ENCODE measurements at regions of chr7 and their contacts with region 1.

Region 1: GRCh38 chr7:106009403-106010226 is 46.6 kb downstream of the CDHR3 start:
- DNase-seq: peak; percentile 88 to 99
- H3K4me3 ChIP-seq: peak overlapping the region in 3 of 4 experiments; percentile 13 to 36 (median 26); a peak in 3 of 8 replicates
- H3K27ac ChIP-seq: 0 out of 2 replicates have a peak overlapping the region, but pooled peaks have one; percentile 16
- H3K4me1 ChIP-seq: peaks cover 3 to 12% (median 6%) of the 10 kb centered on the region in 4 experiments; a peak in 6 of 7 replicates
- H3K27me3 ChIP-seq: peaks cover 0 to 3% (median 2%) of the 10 kb centered on the region in 4 experiments; a peak in 3 of 7 replicates
- CTCF ChIP-seq: peak; percentile 93 to 97 (median 94)
- EP300 ChIP-seq: peak in 1 of 2 experiments; percentile 82; a peak in 1 of 3 replicates
- POLR2A ChIP-seq: no peak
- RAD21 ChIP-seq: peak; percentile 92 to 95

Region 2: GRCh38 chr7:105934572-105935185 is 74.9 kb before region 1 on chr7:
- CTCF ChIA-PET with region 1: interaction called, 61 read pairs
- POLR2A ChIA-PET with region 1: interaction called, 3 read pairs
- DNase-seq: peak in 1 of 2 experiments; percentile 38
- H3K4me3 ChIP-seq: no peak overlapping the region
- H3K27ac ChIP-seq: no peak overlapping the region
- H3K4me1 ChIP-seq: peaks cover 0 to 4% (median under 1%) of the 10 kb centered on the region in 4 experiments; a peak in 2 of 7 replicates
- H3K27me3 ChIP-seq: no peaks in the 10 kb centered on the region
- CTCF ChIP-seq: peak; percentile 48 to 80 (median 78)
- EP300 ChIP-seq: no peak
- POLR2A ChIP-seq: no peak
- RAD21 ChIP-seq: peak; percentile 91 to 94

Region 3: DNA sequence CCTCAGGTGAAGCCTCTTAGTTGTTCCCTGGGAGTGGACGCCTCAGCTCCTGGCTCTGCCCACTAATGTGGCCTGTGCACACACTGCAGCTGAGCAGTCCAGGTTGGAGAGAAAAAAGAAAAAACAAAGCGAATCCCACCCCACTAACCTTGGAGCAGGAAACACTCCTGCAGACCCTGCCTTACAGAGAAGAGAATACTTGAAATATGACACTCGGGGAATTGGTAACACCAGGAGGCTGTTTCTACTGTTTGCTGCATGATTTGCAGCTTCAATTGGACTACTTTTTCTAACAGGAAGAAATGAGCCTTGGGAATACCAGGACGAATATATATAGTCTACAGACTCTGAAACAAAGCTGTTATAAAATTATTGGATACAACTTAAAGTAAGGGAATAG is 24.4 kb before region 1 on chr7:
- CTCF ChIA-PET with region 1: interaction called, 32 read pairs
- POLR2A ChIA-PET with region 1: no interaction called
- DNase-seq: no peak
- H3K4me3 ChIP-seq: no peak overlapping the region
- H3K27ac ChIP-seq: no peak overlapping the region
- H3K4me1 ChIP-seq: peaks cover 8 to 35% (median 32%) of the 10 kb centered on the region in 4 experiments
- H3K27me3 ChIP-seq: no peaks in the 10 kb centered on the region
- CTCF ChIP-seq: no peak
- EP300 ChIP-seq: no peak
- POLR2A ChIP-seq: no peak
- RAD21 ChIP-seq: no peak

Region 4: GRCh38 chr7:105990726-105991453 is 18.7 kb before region 1 on chr7:
- CTCF ChIA-PET with region 1: interaction called, 32 read pairs
- POLR2A ChIA-PET with region 1: no interaction called
- DNase-seq: peak; percentile 68 to 72
- H3K4me3 ChIP-seq: no peak overlapping the region
- H3K27ac ChIP-seq: no peak overlapping the region; the same call in 1 of the 2 replicates
- H3K4me1 ChIP-seq: peaks cover 11 to 34% (median 28%) of the 10 kb centered on the region in 4 experiments; a peak in 6 of 7 replicates
- H3K27me3 ChIP-seq: no peaks in the 10 kb centered on the region
- CTCF ChIP-seq: peak; percentile 37 to 76 (median 73)
- EP300 ChIP-seq: 0 out of 3 replicates have a peak, but pooled peaks of 1 of the 2 experiments have one; percentile 16
- POLR2A ChIP-seq: no peak
- RAD21 ChIP-seq: peak; percentile 40 to 49

Region 5: DNA sequence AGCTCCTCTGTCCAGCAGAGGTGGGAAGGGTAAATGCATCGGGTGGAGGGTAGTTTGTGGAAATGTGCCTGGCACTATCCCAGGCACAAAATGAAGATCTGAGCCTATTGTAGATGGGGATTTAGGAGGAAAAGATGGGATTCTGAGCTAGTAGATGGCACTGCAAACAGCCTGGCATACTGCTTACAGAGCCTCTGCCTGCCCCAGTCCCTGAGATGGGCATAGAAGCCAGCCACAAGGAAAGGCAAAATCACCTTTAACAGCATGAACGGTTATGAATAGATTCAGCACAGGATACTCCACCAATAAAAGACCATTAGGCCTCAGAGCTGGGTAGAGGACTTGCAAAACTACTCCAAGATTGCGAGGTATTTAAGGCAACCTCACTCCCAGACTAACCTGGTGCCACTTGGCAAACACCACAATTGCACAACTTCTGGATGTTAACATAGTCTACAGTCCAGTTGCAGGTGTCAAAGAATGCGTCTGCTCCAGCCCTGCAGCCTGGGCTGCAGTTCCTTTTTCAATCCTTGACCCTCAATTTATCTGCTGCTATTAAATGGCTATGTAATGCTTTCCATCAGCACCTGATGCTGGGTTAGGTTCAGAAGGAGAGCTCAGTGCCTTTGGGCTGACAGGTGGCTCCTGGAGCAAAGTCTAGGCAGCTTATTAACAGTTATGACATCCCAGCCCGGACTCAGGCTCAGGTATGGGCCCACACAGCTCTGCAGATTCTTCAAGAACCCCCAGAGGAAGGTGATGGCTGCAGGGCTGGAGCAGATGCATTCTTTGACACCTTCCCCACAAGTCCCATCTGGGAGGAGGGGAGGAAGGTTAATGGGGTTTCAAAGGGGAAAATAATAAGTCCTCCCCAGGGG is 12.5 kb before region 1 on chr7:
- CTCF ChIA-PET with region 1: interaction called, 15 read pairs
- POLR2A ChIA-PET with region 1: interaction called, 3 read pairs
- DNase-seq: no peak
- H3K4me3 ChIP-seq: no peak overlapping the region
- H3K27ac ChIP-seq: no peak overlapping the region
- H3K4me1 ChIP-seq: peaks cover 0 to 5% (median 3%) of the 10 kb centered on the region in 4 experiments; a peak in 5 of 7 replicates
- H3K27me3 ChIP-seq: no peaks in the 10 kb centered on the region; a peak in 1 of 7 replicates
- CTCF ChIP-seq: no peak
- EP300 ChIP-seq: no peak
- POLR2A ChIP-seq: no peak
- RAD21 ChIP-seq: no peak

Region 6: DNA sequence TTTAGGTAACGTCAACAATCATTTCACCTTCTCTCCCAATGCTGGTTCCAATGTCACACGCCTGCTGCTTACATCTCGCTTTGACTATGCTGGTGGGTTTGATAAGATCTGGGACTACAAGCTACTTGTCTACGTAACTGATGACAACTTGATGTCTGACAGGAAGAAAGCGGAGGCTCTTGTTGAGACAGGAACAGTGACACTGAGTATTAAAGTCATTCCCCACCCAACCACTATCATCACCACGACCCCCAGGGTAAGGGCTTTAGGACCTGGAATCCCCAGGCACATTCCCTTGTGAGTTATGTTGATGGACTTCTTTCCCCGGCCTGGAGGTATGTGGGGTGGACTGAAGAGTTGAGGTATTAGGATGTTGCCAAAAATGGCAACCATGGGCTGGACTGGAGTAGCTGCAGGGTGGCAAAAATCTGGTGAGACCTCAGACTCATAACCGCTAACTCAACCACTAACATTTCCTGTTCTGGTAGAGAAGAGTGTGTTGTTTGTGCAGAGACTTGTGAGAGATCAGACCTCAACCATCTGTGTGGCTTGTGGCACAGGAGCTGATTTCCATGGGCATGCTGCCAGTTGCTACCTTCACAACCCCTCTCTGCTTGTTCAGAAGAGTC is 12.7 kb after region 1 on chr7:
- CTCF ChIA-PET with region 1: interaction called, 68 read pairs
- POLR2A ChIA-PET with region 1: interaction called, 3 read pairs
- DNase-seq: no peak
- H3K4me3 ChIP-seq: no peak overlapping the region
- H3K27ac ChIP-seq: no peak overlapping the region
- H3K4me1 ChIP-seq: peaks cover 5 to 11% (median 6%) of the 10 kb centered on the region in 4 experiments; a peak in 6 of 7 replicates
- H3K27me3 ChIP-seq: no peaks in the 10 kb centered on the region
- CTCF ChIP-seq: no peak
- EP300 ChIP-seq: no peak
- POLR2A ChIP-seq: no peak
- RAD21 ChIP-seq: no peak

Region 7: DNA sequence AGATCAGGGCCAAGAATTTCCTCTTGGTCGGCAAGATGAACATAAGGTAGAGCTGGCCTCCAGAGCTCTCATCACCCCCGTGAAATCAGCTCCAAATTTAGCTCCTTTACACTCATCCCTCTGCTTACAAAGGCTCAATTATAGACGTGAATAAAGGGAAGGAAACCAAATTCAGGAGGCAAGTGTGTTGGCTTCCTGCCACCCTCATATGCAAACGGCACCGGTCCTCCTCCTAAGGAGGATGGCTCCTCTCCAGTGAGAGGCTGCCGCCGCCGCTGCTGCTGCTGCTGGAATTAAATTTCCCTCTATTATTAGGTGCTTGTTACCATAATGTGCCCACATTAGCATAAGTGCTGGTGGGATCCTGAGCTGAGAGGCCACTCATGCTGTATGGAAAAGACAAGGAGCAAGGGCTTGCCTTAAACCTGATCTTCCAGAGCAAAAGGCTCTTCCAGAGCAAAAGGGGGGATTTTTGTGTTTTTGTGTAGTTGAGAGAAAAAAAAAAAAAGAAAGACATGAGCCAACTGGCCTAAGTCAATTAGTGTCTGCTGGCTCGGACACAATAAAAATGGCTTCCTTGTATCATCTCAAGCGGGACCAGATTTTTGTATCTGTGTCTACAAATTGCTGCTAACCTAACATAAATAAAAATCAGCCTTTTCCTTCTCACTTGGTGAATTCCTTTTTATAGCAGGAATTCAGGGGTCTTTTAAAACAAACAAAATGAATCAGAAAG is 21.9 kb after region 1 on chr7:
- CTCF ChIA-PET with region 1: interaction called, 68 read pairs
- POLR2A ChIA-PET with region 1: no interaction called
- DNase-seq: no peak
- H3K4me3 ChIP-seq: no peak overlapping the region; a peak in 1 of 8 replicates
- H3K27ac ChIP-seq: no peak overlapping the region
- H3K4me1 ChIP-seq: peaks cover 0 to 16% (median 5%) of the 10 kb centered on the region in 4 experiments; a peak in 5 of 7 replicates
- H3K27me3 ChIP-seq: no peaks in the 10 kb centered on the region
- CTCF ChIP-seq: no peak
- EP300 ChIP-seq: no peak
- POLR2A ChIP-seq: no peak
- RAD21 ChIP-seq: no peak

Region 8: DNA sequence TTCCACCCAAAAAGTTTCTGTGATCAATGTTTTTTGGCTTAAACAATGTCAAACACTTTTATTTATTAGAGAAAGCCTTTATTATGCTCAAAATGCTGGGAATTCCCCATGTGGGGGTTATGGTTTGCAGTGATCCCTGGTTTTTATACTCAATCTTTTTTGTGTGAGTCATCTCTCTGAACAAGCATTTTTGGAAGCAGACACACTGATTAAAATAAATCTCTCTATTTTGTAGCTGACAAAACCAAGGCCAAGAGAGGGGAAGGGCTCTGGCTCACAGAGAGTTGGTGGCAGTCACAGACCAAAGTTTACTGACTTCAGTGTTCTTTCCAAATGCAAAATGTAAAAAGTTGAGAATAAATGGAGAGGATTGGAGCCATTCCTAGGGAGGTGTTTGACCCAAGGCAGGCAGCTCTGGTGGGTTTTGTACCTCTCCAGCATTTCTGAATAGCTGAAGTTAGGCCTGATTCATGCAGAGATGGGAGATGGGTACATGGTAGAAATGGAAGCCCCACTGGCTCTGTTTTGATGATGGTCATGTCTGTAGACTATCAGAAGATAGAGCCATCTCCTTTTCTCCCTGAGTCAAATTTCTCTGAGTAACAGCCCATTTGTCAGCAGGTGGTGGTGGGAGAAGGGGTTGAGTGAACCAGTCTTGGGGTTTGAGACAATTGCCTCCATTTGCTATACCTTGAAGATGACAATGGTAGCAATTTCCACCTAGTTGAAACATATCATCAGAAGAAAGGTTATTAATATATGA is 320.5 kb after region 1 on chr7:
- CTCF ChIA-PET with region 1: no interaction called
- POLR2A ChIA-PET with region 1: no interaction called
- DNase-seq: no peak
- H3K4me3 ChIP-seq: no peak overlapping the region
- H3K27ac ChIP-seq: no peak overlapping the region
- H3K4me1 ChIP-seq: no peaks in the 10 kb centered on the region
- H3K27me3 ChIP-seq: no peaks in the 10 kb centered on the region
- CTCF ChIP-seq: no peak
- EP300 ChIP-seq: no peak
- POLR2A ChIP-seq: no peak
- RAD21 ChIP-seq: no peak